GM10248 (cell line): ENCODE measurements at regions of chr6 and their contacts with region 1.

Region 1: GRCh38 chr6:37691904-37692806 is 5.5 kb downstream of the MDGA1 start:
- DNase-seq: peak; percentile 85
- CTCF ChIP-seq: peak; percentile 100

Region 2: DNA sequence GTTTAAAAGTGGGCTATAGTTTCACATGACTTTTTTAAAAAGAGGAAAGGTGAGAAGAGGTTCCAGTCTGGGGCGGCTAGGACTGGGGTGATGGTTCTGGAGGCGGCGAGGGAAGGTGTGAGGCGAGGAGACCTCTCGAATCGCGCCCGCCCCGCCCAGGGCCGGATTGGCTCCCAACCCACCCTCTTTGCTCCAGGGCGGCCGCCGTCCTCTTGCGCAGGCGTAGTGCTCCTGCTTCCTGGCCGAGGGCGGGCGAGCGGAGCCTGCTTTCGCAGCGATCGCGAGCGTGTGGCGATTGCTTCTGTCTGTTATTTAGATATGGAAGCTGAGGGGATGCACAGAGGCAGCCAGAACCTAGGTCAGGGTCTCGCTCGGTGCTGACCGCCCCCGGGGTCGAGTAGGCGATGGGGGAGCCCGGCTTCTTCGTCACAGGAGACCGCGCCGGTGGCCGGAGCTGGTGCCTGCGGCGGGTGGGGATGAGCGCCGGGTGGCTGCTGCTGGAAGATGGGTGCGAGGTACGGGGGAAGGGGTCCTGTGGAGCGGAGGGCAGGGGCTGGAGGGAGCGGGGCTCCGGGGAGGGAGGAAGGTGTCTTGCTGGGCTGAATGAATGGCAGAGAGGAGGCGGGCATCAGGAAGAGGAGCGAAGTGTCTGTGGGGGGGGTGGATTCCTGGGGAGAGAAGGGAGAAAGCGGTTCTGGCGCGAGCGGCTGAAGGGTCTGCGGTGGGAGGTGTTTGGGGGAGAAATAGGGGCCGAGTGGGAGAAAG is 338.2 kb before region 1 on chr6 and contains the start of gene RNF8:
- CTCF ChIA-PET with region 1: no interaction called
- POLR2A ChIA-PET with region 1: no interaction called
- DNase-seq: peak; percentile 99
- CTCF ChIP-seq: no peak

Region 3: DNA sequence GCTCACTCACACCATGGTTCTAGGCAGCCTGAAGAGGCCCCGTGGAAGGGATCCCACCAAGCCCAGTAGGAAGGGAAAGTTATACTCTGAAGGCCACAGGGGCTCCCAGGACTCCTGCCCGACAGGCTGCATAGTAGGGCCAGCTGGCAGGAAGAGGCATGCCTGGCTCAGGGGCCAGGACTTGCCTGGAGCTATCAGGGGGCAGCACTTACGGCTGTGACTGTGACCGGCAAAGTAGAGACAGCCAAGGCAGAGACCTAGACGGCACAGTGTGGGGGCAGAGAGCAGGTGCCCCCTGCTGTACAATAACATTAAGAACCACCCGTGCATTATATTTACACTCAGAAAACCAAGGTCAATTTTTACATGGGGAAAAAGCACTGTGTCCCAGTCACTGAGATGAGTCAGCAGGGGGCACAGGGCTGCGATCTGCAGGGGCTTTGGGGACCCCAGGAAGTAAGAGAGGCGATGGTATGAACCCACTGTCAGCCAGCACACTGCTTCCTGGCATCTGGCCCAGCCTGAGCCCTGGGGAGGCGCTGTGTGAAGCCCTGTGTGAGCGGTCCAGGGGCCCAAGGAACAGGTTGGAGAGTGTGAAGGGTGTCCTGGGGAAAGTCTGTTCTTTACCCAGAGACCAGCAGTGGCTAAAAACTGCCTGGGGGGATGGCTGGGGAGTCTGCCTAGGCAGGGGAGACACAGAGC is 202.3 kb before region 1 on chr6:
- CTCF ChIA-PET with region 1: interaction called, 15 read pairs
- POLR2A ChIA-PET with region 1: no interaction called
- DNase-seq: no peak
- CTCF ChIP-seq: peak; percentile 4

Region 4: DNA sequence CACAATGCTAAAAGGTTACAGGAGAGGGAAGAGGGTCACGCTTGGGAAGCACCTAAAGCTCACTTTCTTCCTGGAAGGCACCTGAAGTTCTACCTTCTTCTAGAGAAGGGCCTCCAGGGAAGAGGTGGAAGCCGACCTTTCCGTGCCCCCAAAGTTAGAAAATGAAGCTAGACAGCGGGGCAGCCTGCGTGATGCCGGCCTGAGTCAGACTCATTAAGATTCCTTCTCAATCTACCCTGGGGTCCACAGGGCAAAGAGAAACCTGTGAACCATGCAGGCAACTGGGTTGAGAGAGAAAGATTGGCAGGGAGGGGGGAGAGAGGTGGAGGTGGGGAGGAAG is 137.7 kb before region 1 on chr6:
- CTCF ChIA-PET with region 1: interaction called, 10 read pairs
- POLR2A ChIA-PET with region 1: no interaction called
- DNase-seq: no peak
- CTCF ChIP-seq: no peak

Region 5: DNA sequence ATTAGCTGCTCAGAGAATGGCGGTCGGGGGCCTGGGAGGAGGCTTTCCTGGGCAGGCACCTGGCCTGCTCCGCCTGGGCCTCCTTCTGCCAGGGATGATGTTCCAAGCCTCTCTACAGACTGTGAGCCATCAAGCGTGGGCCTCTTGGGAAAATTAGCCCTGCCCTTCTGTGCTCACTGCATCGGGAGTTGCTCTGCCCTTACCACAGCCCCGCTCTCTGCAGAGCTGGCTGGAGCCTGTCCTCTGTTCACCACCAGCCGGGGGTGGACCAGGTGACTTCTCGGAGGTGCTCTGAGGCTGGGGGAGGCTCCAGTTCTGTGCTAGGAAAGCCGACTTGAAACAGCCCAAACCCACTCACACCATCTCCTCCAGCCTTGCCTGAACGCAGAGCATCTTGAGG is 18.7 kb before region 1 on chr6:
- CTCF ChIA-PET with region 1: interaction called, 11 read pairs
- POLR2A ChIA-PET with region 1: no interaction called
- DNase-seq: no peak
- CTCF ChIP-seq: no peak

Region 6: GRCh38 chr6:37705239-37706051 is 13.3 kb after region 1 on chr6:
- CTCF ChIA-PET with region 1: interaction called, 18 read pairs
- POLR2A ChIA-PET with region 1: no interaction called
- DNase-seq: peak; percentile 90
- CTCF ChIP-seq: peak; percentile 75